Gastrocnemius medialis (tissue), 4 donors: ENCODE measurements at regions of chr18 and their contacts with region 1.

Region 1: DNA sequence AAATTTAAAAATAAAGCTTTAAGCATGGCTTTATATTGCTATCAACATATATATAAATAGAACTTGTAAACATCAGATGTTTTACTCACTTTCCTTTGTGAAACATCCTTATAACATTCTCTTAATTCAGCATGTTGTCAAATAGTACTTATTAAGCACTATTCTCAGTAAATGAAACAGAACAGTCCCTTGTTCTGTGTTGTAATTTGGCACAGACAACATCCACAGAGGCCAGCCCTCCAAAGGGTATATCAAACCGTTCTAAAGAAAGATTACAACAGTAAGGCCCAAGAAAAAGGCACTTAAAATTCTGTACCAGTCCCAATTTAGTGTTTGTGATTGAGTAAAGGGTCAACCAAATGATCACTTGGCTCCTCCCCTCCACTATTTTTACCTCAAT is 46.0 kb downstream of the GAREM1 start:
- DNase-seq: no peak
- ATAC-seq: peak in 1 of 2 donors; percentile 31
- H3K4me3 ChIP-seq: no peak overlapping the region
- H3K27ac ChIP-seq: no peak overlapping the region
- H3K4me1 ChIP-seq: peaks cover 54 to 78% of the 10 kb centered on the region in 2 donors
- H3K27me3 ChIP-seq: no peaks in the 10 kb centered on the region
- CTCF ChIP-seq: no peak
- POLR2A ChIP-seq: no peak

Region 2: DNA sequence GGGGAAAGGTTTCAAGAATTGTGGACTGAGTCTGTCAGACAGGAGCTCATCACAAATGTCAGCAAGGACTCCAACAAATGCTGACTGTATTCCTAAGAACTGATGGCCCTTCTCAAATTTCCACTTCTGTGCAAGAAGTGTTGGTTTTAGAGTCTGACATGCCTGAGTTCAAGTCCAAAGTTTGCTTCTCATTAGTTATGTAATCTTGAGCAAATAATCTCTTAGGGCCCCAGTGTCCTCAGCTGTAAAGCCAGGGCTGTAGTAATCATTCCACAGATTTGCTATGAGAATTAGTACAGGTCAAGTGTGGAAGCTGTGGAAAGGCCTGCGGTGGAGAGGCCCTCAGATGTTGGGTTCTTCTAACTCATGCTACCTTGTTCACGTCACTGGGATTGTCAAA is 211.0 kb before region 1 on chr18:
- in situ Hi-C with region 1: no loop called
- intact Hi-C with region 1: no loop called
- DNase-seq: no peak
- ATAC-seq: no peak
- H3K4me3 ChIP-seq: no peak overlapping the region
- H3K27ac ChIP-seq: no peak overlapping the region
- H3K4me1 ChIP-seq: no peaks in the 10 kb centered on the region
- H3K27me3 ChIP-seq: no peaks in the 10 kb centered on the region
- CTCF ChIP-seq: no peak
- POLR2A ChIP-seq: no peak

Region 3: DNA sequence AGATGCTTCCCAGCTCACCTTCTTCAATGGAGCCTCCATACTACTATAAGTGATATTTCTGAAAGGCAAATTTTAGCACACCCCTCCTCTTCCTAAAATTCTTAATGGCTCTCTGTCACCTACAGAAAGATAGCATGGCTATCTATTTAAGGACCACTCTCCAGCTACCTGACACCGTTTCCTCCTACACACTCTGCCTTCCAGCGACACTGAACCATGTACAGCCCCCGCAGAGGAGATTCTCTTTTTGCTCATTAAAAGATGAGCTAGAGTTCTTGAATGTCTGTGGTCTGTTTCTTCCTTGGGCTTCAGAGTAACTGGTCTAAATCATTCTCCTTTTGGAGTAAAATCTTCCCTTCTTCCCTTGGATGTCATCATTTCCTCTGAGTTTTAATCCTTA is 84.4 kb after region 1 on chr18:
- in situ Hi-C with region 1: loop called in 1 of 4 experiments (anchors 25 kb)
- intact Hi-C with region 1: no loop called
- DNase-seq: no peak
- ATAC-seq: no peak
- H3K4me3 ChIP-seq: no peak overlapping the region
- H3K27ac ChIP-seq: no peak overlapping the region
- H3K4me1 ChIP-seq: no peaks in the 10 kb centered on the region
- H3K27me3 ChIP-seq: no peaks in the 10 kb centered on the region
- CTCF ChIP-seq: no peak
- POLR2A ChIP-seq: no peak